ENCODE measurements at regions of chr18 and their contacts with region 1.

Region 1: GRCh38 chr18:2906704-2907549 is 60.1 kb downstream of the EMILIN2 start:
- DNase-seq: peak; percentile 38 to 47
- ATAC-seq: peak in 7 of 8 donors; percentile 13 to 45 (median 33)
- H3K4me3 ChIP-seq: peak overlapping the region; percentile 44 to 80 (median 59)
- H3K27ac ChIP-seq: peak overlapping the region in 9 of 10 donors; percentile 29 to 90 (median 66)
- H3K4me1 ChIP-seq: peaks cover 11 to 57% (median 44%) of the 10 kb centered on the region in 9 donors
- H3K27me3 ChIP-seq: peaks cover 0 to 8% (median 0%) of the 10 kb centered on the region in 7 donors
- CTCF ChIP-seq: peak in 3 of 9 donors; percentile 20 to 32 (median 22)

Region 2: GRCh38 chr18:2776601-2777000 is 130.3 kb before region 1 on chr18:
- intact Hi-C with region 1: loop called in 2 of 10 experiments (anchors 10 kb)
- DNase-seq: no peak
- ATAC-seq: no peak
- H3K4me3 ChIP-seq: no peak overlapping the region
- H3K27ac ChIP-seq: no peak overlapping the region
- H3K4me1 ChIP-seq: no peaks in the 10 kb centered on the region
- H3K27me3 ChIP-seq: no peaks in the 10 kb centered on the region
- CTCF ChIP-seq: no peak

Region 3: DNA sequence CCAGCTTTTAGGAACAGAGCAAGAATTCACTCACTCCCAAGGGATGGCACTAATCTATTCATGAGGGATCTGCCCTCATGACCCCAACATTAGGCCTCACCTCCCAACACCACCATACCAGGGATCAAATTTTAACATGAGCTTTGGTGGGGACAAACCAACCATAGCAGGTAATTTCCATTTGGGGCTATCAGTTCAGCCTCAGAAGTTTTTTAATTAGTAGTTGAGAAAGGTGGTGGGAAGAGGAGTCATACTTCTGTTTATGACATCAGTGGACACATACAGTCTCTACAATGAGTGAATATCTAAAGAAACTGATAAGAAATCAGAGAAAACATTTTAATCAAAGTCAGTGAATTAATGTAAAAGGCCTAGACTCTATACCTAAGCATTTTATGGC is 119.7 kb before region 1 on chr18:
- intact Hi-C with region 1: loop called in 1 of 10 experiments (anchors 10 kb)
- DNase-seq: no peak
- ATAC-seq: no peak
- H3K4me3 ChIP-seq: no peak overlapping the region
- H3K27ac ChIP-seq: no peak overlapping the region
- H3K4me1 ChIP-seq: no peaks in the 10 kb centered on the region
- H3K27me3 ChIP-seq: no peaks in the 10 kb centered on the region
- CTCF ChIP-seq: no peak

Region 4: DNA sequence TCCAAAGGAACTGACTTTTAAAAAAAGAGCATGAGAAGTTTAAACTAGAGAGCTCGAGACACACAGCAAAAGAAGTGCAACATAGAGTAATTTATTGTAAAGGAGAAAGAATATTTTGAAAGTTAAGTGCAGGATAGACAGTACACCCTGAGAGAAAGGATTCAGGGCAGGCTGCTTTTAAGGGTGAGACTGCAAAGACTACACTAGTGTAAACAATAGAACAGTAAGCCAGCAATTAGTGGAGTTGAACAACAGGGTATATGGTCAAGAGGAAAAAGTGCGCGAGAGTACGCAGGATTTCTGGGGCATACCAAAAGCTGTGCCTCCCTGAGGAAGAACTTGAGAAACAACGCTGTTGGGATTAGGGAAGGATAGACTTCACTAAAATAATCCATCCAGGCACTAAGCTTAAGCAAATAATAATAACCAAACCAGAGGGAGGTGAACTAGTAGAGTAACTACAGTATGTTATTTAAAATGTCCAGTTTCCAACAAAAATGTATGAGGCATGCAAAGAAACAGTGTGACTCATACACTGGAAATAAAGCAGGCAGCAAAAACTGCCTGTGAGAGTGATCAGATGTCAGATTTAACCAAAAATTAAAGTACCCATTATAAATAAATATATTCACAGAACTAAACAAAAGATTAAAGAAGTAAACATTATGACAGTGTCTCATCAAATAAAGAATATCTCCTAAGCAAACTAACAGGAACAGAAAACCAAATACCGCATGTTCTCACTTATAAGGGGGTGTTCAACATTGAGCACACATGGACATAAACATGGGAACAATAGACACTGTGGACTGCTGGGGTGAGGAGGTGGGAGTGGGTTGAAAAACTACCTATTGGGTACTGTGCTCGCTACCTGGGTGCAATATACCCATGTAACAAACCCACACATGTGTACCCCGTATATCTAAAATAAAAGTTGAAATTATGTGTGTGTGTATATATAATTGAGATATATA is 100.7 kb before region 1 on chr18:
- intact Hi-C with region 1: loop called in 1 of 10 experiments (anchors 10 kb)
- DNase-seq: no peak
- ATAC-seq: no peak
- H3K4me3 ChIP-seq: no peak overlapping the region
- H3K27ac ChIP-seq: no peak overlapping the region
- H3K4me1 ChIP-seq: no peaks in the 10 kb centered on the region
- H3K27me3 ChIP-seq: no peaks in the 10 kb centered on the region
- CTCF ChIP-seq: no peak

Region 5: GRCh38 chr18:2846636-2847364 is 60.1 kb before region 1 on chr18 and contains the start of gene EMILIN2:
- intact Hi-C with region 1: loop called in 5 of 10 experiments (anchors 5 to 10 kb)
- DNase-seq: peak; percentile 71 to 72
- ATAC-seq: peak; percentile 38 to 66 (median 45)
- H3K4me3 ChIP-seq: peak within 1 kb of the TSS; percentile 33 to 76 (median 58)
- H3K27ac ChIP-seq: peak within 1 kb of the TSS in 9 of 10 donors; percentile 20 to 95 (median 73)
- H3K4me1 ChIP-seq: peaks cover 0 to 50% (median 26%) of the 10 kb centered on the region in 9 donors
- H3K27me3 ChIP-seq: peaks cover 4 to 56% (median 29%) of the 10 kb centered on the region in 7 donors
- CTCF ChIP-seq: peak in 2 of 9 donors; percentile 4 to 6
- total RNA-seq, gene EMILIN2: 9.5 to 50.5 (median 19.6) TPM

Region 6: GRCh38 chr18:2857491-2858131 is 49.3 kb before region 1 on chr18:
- intact Hi-C with region 1: loop called in 2 of 10 experiments (anchors 2 to 5 kb)
- DNase-seq: peak; percentile 71 to 78
- ATAC-seq: peak; percentile 82 to 97 (median 90)
- H3K4me3 ChIP-seq: peak overlapping the region in 3 of 10 donors; percentile 1 to 9 (median 2)
- H3K27ac ChIP-seq: peak overlapping the region in 9 of 10 donors; percentile 40 to 86 (median 76)
- H3K4me1 ChIP-seq: peaks cover 3 to 48% (median 21%) of the 10 kb centered on the region in 9 donors
- H3K27me3 ChIP-seq: peaks cover 0 to 3% (median 0%) of the 10 kb centered on the region in 7 donors
- CTCF ChIP-seq: no peak

Region 7: DNA sequence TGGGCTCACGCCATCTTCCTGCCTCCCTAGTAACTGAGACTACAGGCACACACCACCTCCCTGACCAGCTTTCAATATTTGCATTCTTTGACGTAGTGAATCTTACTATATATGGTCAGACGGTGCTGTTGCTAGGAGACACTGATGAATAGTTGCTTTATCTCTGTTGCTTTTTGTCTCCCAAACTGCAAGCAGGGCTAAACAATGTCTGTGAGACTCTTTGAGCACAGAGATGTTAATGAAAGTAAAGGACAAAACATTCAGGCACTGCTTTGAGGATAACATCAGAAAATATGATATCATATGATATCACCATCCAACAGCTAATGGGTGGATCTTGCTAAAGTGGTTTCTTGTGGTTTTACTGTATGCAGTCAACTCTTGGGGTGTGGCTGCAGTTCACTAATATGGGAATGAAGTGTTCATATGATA is 17.1 kb before region 1 on chr18:
- intact Hi-C with region 1: no loop called
- DNase-seq: no peak
- ATAC-seq: no peak
- H3K4me3 ChIP-seq: no peak overlapping the region
- H3K27ac ChIP-seq: no peak overlapping the region
- H3K4me1 ChIP-seq: peaks cover 0 to 21% (median 11%) of the 10 kb centered on the region in 9 donors
- H3K27me3 ChIP-seq: no peaks in the 10 kb centered on the region
- CTCF ChIP-seq: no peak